Transverse colon (tissue), 4 donors: ENCODE measurements at regions of chr19 and their contacts with region 1.

Region 1: DNA sequence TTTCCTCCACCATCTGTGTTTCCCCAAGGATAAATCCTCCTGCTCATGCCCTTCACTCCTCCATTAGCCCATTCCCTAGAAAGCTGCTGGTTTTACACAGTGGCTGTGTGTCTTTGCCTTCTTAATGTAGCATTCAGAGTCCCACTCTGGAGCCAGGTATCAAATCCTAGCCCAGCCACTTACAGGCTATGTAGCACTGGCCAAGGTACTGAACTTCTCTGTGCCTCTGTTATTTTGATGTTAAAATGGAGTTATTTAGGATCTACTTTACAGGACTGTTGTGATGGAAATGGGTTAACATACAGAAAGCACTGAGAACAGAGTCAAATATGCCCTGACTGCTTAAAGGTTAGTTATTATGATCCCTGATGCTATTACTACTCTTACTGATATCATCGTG is 1.5 kb upstream of the ZSCAN4 start:
- DNase-seq: no peak
- H3K4me3 ChIP-seq: no peak overlapping the region
- H3K27ac ChIP-seq: no peak overlapping the region
- H3K4me1 ChIP-seq: peaks cover 3 to 14% (median 10%) of the 10 kb centered on the region in 4 donors
- H3K27me3 ChIP-seq: peaks cover 21% of the 10 kb centered on the region
- CTCF ChIP-seq: no peak
- EP300 ChIP-seq: no peak
- POLR2A ChIP-seq: no peak

Region 2: DNA sequence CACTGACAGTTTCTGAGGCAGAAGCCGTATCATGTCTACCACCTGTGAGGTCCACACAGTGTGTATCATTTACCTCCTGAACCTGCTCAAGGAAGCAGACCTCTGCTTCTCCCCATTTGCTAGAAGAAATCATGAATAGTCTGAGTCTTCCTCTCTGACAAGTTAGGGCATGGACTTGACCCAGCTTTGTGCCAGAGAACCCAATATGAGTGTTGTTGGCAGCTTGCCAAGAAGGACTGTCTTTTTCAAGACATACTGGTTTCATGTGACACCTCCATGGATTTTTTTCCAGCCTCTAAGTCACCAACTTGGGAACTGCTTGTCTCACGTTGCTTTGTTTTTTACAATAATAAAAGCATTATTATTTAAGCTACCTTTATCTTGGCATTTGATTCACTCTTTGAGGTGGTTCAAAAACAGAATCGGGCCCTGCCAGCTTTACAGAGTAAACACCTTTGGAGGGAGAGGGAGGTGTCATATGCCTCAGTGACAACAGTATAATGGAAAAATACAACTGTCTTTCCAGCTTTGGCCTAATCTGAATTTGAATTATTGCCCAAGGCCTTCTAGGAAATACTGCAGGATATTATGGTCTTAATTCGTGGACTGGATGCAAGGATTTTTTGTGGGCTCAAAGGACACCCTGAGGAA is 24.7 kb before region 1 on chr19:
- in situ Hi-C with region 1: no loop called
- intact Hi-C with region 1: loop called (anchors 1 kb)
- DNase-seq: no peak
- H3K4me3 ChIP-seq: no peak overlapping the region
- H3K27ac ChIP-seq: no peak overlapping the region
- H3K4me1 ChIP-seq: no peaks in the 10 kb centered on the region
- H3K27me3 ChIP-seq: no peaks in the 10 kb centered on the region
- CTCF ChIP-seq: no peak
- EP300 ChIP-seq: no peak
- POLR2A ChIP-seq: no peak